B cell (primary cell): ENCODE measurements at regions of chr5 and their contacts with region 1.

Region 1: DNA sequence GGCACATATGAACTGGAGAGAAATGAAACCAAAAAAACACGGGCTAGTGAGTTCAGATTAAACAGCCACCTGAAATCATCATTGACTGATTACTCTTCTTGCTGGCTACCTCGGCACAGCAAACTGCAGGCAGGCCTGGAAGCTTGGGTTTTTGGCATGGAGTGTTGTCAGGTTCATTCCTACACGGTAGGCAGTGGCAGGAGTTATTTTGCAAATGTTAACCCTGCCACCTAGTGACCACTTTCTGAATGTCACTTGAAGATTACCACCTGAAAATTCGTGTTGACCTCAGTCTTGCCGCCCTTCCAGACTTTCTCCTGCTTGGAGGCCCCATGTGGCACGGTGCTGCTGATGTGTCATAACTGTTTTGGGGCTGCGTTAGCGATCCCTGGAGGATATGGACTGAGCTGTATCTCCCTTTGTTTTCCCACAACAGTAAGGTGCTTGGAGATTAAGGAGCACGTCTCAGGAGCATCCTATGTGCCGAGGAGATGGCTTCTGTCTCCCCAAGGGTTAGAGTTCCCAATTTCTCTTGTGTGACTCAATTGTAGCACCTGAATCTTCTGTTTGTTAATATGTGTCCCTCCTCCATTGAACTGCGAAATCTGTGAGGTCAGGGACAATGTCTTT is 12.7 kb upstream of the CD180 start:
- DNase-seq: peak; percentile 85
- ATAC-seq: peak; percentile 50
- H3K4me3 ChIP-seq: no peak overlapping the region
- H3K4me3 Mint-ChIP-seq: peak overlapping the region; percentile 62
- H3K27ac ChIP-seq: peak overlapping the region; percentile 9 to 15
- H3K27ac Mint-ChIP-seq: peak overlapping the region; percentile 90
- H3K4me1 ChIP-seq: peaks cover 52% of the 10 kb centered on the region in 2 donors
- H3K4me1 Mint-ChIP-seq: peaks cover 60% of the 10 kb centered on the region
- H3K27me3 ChIP-seq: no peaks in the 10 kb centered on the region
- H3K27me3 Mint-ChIP-seq: no peaks in the 10 kb centered on the region
- CTCF ChIP-seq: peak; percentile 91

Region 2: GRCh38 chr5:66553916-66554575 is 655.2 kb before region 1 on chr5:
- CTCF ChIA-PET with region 1: no interaction called
- POLR2A ChIA-PET with region 1: no interaction called
- intact Hi-C with region 1: loop called (anchors 5 kb)
- DNase-seq: peak; percentile 93
- ATAC-seq: peak; percentile 94
- H3K4me3 ChIP-seq: peak overlapping the region in 1 of 5 experiments; percentile 1
- H3K4me3 Mint-ChIP-seq: peak overlapping the region; percentile 65
- H3K27ac ChIP-seq: peak overlapping the region; percentile 69 to 75
- H3K27ac Mint-ChIP-seq: peak overlapping the region; percentile 93
- H3K4me1 ChIP-seq: peaks cover 28 to 34% of the 10 kb centered on the region in 2 donors
- H3K4me1 Mint-ChIP-seq: peaks cover 39% of the 10 kb centered on the region
- H3K27me3 ChIP-seq: peaks cover 0 to 2% (median 0%) of the 10 kb centered on the region in 4 experiments
- H3K27me3 Mint-ChIP-seq: no peaks in the 10 kb centered on the region
- CTCF ChIP-seq: no peak

Region 3: DNA sequence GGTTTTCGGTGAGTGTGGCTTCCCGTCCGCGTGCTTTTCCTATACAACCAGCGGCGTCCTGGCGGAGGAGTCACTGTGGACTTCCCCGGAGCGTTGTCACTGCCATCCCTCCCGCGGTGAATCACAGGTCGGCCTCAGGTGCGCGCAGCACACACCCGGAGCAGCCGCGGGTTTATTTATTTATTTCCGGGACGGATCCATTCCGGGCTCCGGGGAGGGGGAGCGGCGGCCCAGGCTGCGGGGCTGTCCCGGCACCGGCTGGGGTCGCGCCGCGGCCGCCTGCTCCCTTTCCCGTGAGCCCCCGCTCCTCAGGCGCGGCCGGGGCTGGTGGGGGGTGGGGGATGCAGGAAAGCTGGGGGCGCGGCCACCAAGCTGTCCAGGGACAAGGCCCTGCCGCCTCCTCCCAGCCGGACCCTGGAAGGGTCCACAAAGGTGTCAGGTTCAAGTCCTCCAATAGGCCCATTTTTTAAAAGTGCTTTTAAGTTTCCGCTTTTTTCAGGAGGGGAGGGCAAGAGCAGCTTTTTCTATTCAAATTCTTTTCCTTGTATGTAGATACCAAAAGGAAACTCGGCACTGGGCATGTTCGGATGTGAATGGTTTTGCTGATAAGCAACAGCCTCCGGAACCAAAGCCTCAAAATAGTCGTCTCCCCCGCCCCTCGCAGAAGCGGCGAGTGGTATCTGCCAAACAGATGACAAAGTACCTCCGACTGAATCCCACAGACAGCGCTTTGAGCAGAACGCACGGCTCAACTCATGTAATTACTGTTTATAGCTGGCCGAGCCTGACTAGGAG is 205.1 kb before region 1 on chr5:
- CTCF ChIA-PET with region 1: interaction called, 3 read pairs
- POLR2A ChIA-PET with region 1: no interaction called
- intact Hi-C with region 1: loop called (anchors 5 kb)
- DNase-seq: peak; percentile 87
- ATAC-seq: peak; percentile 81
- H3K4me3 ChIP-seq: peak overlapping the region; percentile 44 to 91 (median 74)
- H3K4me3 Mint-ChIP-seq: peak overlapping the region; percentile 96
- H3K27ac ChIP-seq: peak overlapping the region in 1 of 2 donors; percentile 67
- H3K27ac Mint-ChIP-seq: peak overlapping the region; percentile 93
- H3K4me1 ChIP-seq: peaks cover 13 to 27% of the 10 kb centered on the region in 2 donors
- H3K4me1 Mint-ChIP-seq: peaks cover 35% of the 10 kb centered on the region
- H3K27me3 ChIP-seq: peaks cover 0 to 6% (median 2%) of the 10 kb centered on the region in 4 experiments
- H3K27me3 Mint-ChIP-seq: no peaks in the 10 kb centered on the region
- CTCF ChIP-seq: no peak

Region 4: DNA sequence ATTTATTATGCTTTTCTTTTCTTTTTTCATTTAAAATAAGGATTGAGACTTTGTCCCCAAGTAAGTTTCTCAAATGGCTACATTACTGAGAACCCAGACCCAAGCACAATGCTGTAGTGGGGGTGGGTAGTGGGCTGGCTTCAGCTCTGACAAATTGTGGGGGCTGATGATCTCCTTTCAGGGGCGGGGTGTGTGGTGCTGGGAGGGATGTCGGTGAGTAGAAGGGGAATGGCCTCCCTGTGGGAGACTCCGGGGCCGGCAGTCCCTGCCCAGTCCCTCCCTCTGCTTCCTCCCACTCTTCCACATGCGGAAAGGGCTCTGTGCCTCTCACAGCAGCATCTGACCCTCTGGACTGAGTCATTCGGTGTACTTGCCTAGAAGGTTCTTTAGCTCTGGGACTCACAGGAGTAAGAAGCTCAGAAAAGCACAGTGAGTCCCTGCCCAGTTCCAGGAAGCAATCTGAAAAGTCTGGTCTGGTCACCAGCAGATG is 26.9 kb before region 1 on chr5:
- CTCF ChIA-PET with region 1: interaction called, 8 read pairs
- POLR2A ChIA-PET with region 1: no interaction called
- intact Hi-C with region 1: loop called (anchors 2 kb)
- DNase-seq: no peak
- ATAC-seq: no peak
- H3K4me3 ChIP-seq: no peak overlapping the region
- H3K4me3 Mint-ChIP-seq: no peak overlapping the region
- H3K27ac ChIP-seq: peak overlapping the region in 1 of 2 donors; percentile 54
- H3K27ac Mint-ChIP-seq: peak overlapping the region; percentile 55
- H3K4me1 ChIP-seq: peaks cover 69 to 74% of the 10 kb centered on the region in 2 donors
- H3K4me1 Mint-ChIP-seq: peaks cover 67% of the 10 kb centered on the region
- H3K27me3 ChIP-seq: no peaks in the 10 kb centered on the region
- H3K27me3 Mint-ChIP-seq: no peaks in the 10 kb centered on the region
- CTCF ChIP-seq: no peak

Region 5: DNA sequence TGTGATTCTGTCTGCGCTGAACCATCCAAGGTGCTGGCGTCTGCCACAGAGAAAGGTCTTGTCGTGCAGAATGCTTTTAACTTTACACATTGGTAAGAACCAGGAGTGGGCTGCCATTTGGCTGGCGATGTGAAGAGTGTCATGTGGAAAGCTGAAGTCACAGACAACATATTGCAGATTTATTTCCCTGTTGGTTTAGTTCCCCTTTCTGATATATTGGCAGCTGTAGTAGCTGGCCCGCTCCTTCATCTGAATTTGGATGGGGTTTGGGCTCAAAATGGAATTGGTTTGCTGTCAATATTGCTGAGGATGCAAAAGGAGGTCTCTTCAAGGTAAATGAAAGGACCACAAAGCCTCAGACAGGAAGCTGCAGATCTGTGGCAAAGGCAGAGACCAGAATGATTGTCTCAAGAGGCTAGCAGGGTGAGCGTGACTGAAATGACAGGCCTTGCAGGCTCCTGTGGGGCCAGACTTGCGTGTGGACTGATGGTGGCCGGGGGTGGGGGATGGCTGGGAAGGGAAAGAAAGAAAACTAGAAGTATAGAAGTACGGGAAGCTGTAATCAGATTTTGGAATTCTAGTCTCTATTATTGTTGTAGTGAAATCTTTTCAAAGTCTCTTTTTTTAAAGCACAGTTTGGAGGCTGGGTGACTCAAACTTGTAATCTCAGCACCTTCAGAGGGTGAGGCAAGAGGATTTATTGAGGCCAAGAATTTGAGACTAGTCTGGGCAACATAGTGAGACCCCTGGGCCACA is 12.4 kb after region 1 on chr5:
- CTCF ChIA-PET with region 1: interaction called, 14 read pairs
- POLR2A ChIA-PET with region 1: interaction called, 3 read pairs
- intact Hi-C with region 1: loop called (anchors 2 kb)
- DNase-seq: peak; percentile 71
- ATAC-seq: peak; percentile 70
- H3K4me3 ChIP-seq: peak overlapping the region in 4 of 5 experiments; percentile 23 to 59 (median 42)
- H3K4me3 Mint-ChIP-seq: peak overlapping the region; percentile 87
- H3K27ac ChIP-seq: peak overlapping the region; percentile 61 to 71
- H3K27ac Mint-ChIP-seq: peak overlapping the region; percentile 97
- H3K4me1 ChIP-seq: peaks cover 41 to 48% of the 10 kb centered on the region in 2 donors
- H3K4me1 Mint-ChIP-seq: peaks cover 53% of the 10 kb centered on the region
- H3K27me3 ChIP-seq: no peaks in the 10 kb centered on the region
- H3K27me3 Mint-ChIP-seq: no peaks in the 10 kb centered on the region
- CTCF ChIP-seq: no peak

Region 6: GRCh38 chr5:67516948-67517565 is 307.8 kb after region 1 on chr5:
- CTCF ChIA-PET with region 1: no interaction called
- POLR2A ChIA-PET with region 1: no interaction called
- intact Hi-C with region 1: no loop called
- DNase-seq: no peak
- ATAC-seq: no peak
- H3K4me3 ChIP-seq: no peak overlapping the region
- H3K4me3 Mint-ChIP-seq: no peak overlapping the region
- H3K27ac ChIP-seq: no peak overlapping the region
- H3K27ac Mint-ChIP-seq: no peak overlapping the region
- H3K4me1 ChIP-seq: no peaks in the 10 kb centered on the region
- H3K4me1 Mint-ChIP-seq: no peaks in the 10 kb centered on the region
- H3K27me3 ChIP-seq: no peaks in the 10 kb centered on the region
- H3K27me3 Mint-ChIP-seq: peaks cover 4% of the 10 kb centered on the region
- CTCF ChIP-seq: no peak